ENCODE measurements at regions of chr10 and their contacts with region 1.

Region 1: GRCh38 chr10:116385994-116386809 is 41.4 kb upstream of the PNLIPRP3 start:
- DNase-seq: no peak
- H3K4me3 ChIP-seq: no peak overlapping the region
- H3K27me3 ChIP-seq: no peaks in the 10 kb centered on the region
- CTCF ChIP-seq: peak; percentile 56

Region 2: GRCh38 chr10:115706026-115706781 is 680.0 kb before region 1 on chr10:
- CTCF ChIA-PET with region 1: interaction called, 29 read pairs
- POLR2A ChIA-PET with region 1: no interaction called
- DNase-seq: no peak
- H3K4me3 ChIP-seq: no peak overlapping the region
- H3K27me3 ChIP-seq: no peaks in the 10 kb centered on the region
- CTCF ChIP-seq: peak; percentile 59

Measured in BJ (cell line).